ENCODE measurements at regions of chr10 and their contacts with region 1.

Region 1: GRCh38 chr10:119131512-119132240 is 27.8 kb downstream of the DENND10 start:
- DNase-seq: peak; percentile 72
- H3K4me3 Mint-ChIP-seq: peak overlapping the region; percentile 73
- H3K27ac Mint-ChIP-seq: peak overlapping the region; percentile 98
- H3K4me1 Mint-ChIP-seq: peaks cover 67% of the 10 kb centered on the region
- H3K27me3 Mint-ChIP-seq: no peaks in the 10 kb centered on the region

Region 2: GRCh38 chr10:118990326-118990725 is 141.3 kb before region 1 on chr10:
- CTCF ChIA-PET with region 1: no interaction called
- POLR2A ChIA-PET with region 1: no interaction called
- DNase-seq: no peak
- H3K4me3 Mint-ChIP-seq: no peak overlapping the region
- H3K27ac Mint-ChIP-seq: no peak overlapping the region
- H3K4me1 Mint-ChIP-seq: peaks cover 15% of the 10 kb centered on the region
- H3K27me3 Mint-ChIP-seq: peaks cover 44% of the 10 kb centered on the region

Region 3: DNA sequence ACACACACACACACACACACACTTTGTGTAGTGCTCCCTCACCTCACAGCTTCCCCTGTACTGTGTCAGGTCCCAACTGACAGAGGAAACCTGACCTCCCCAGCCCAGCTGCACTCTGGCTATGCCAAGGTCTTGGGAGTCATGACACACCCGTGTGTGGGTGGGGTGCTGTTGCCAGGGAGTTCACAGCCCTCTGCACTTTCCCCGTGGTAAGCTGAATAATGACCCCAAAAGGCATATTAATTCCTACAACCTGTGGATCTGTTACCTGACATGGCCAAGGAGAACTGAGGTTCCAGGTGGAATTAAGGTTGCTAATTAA is 111.1 kb before region 1 on chr10:
- CTCF ChIA-PET with region 1: no interaction called
- POLR2A ChIA-PET with region 1: no interaction called
- DNase-seq: no peak
- H3K4me3 Mint-ChIP-seq: no peak overlapping the region
- H3K27ac Mint-ChIP-seq: no peak overlapping the region
- H3K4me1 Mint-ChIP-seq: no peaks in the 10 kb centered on the region
- H3K27me3 Mint-ChIP-seq: peaks cover 10% of the 10 kb centered on the region

Region 4: GRCh38 chr10:119080521-119081260 is 51.0 kb before region 1 on chr10 and contains the start of gene EIF3A:
- CTCF ChIA-PET with region 1: interaction called, 14 read pairs
- POLR2A ChIA-PET with region 1: interaction called, 117 read pairs
- DNase-seq: peak; percentile 94
- H3K4me3 Mint-ChIP-seq: peak within 1 kb of the TSS; percentile 95
- H3K27ac Mint-ChIP-seq: peak within 1 kb of the TSS; percentile 93
- H3K4me1 Mint-ChIP-seq: peaks cover 50% of the 10 kb centered on the region
- H3K27me3 Mint-ChIP-seq: no peaks in the 10 kb centered on the region
- total RNA-seq, gene EIF3A: 129 to 130 TPM

Region 5: DNA sequence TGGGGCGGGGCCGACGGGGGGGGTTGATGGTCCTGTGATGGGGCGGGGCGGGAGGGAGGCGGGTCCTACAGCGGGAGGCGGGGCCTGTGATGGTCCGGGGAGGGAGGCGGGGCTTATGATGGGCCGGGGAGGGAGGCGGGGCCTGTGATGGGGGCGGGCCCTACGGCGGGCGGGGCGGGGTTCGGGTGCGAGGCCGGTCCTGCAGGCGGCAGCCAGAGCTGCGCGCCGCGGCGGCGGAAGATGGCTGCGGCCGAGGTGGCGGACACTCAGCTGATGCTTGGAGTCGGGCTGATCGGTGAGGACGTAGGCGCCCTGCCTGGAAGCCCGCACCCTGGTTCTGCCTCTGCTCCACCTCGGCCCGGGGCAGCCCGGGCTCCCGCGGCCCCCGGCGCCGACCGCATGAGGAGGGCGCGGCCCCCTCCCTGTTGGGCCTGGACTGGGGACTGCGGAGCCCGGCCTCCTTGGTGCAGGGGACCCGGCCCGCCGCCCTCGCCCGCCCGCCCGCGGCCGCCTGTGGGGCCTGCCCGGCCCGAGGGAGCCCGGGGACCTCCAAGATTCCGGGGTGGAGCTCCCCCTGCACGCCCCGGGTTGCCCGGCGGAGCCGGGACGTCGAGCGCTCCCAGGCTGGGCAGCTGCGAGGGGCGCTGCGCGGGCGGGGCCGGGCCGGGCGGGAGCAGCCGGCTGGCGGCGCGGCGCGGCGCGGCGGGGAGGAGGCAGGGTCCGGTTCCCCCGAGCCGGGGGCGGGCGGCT is 27.6 kb before region 1 on chr10 and contains the start of gene DENND10:
- CTCF ChIA-PET with region 1: interaction called, 9 read pairs
- POLR2A ChIA-PET with region 1: interaction called, 90 read pairs
- DNase-seq: peak; percentile 81
- H3K4me3 Mint-ChIP-seq: peak within 1 kb of the TSS; percentile 76
- H3K27ac Mint-ChIP-seq: peak within 1 kb of the TSS; percentile 21
- H3K4me1 Mint-ChIP-seq: peaks cover 43% of the 10 kb centered on the region
- H3K27me3 Mint-ChIP-seq: no peaks in the 10 kb centered on the region
- total RNA-seq, gene DENND10: 52.4 to 57.1 TPM

Region 6: DNA sequence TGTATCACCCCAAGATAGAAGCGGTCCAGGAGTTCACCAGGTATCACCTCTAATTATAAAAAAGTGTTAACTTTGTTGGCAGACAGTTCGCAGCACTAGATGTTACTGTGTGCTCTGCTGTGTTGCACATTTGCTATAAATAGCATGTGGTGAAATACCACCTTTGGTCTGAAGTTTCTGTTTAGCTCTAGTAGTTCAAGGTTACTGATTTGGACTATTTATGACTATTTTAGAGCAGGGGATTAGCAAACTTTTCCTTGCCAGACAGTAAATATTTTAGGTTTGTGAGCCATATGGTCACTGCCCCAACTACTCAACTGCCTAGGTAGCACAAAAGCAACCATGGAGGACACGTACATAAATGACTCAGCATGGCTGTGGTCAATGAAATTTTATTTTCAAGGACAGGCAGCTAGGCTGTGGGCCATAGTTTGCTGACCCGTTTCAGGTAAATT is 11.2 kb before region 1 on chr10:
- CTCF ChIA-PET with region 1: interaction called, 13 read pairs
- POLR2A ChIA-PET with region 1: interaction called, 22 read pairs
- DNase-seq: no peak
- H3K4me3 Mint-ChIP-seq: no peak overlapping the region
- H3K27ac Mint-ChIP-seq: peak overlapping the region; percentile 26
- H3K4me1 Mint-ChIP-seq: peaks cover 22% of the 10 kb centered on the region
- H3K27me3 Mint-ChIP-seq: no peaks in the 10 kb centered on the region

Region 7: DNA sequence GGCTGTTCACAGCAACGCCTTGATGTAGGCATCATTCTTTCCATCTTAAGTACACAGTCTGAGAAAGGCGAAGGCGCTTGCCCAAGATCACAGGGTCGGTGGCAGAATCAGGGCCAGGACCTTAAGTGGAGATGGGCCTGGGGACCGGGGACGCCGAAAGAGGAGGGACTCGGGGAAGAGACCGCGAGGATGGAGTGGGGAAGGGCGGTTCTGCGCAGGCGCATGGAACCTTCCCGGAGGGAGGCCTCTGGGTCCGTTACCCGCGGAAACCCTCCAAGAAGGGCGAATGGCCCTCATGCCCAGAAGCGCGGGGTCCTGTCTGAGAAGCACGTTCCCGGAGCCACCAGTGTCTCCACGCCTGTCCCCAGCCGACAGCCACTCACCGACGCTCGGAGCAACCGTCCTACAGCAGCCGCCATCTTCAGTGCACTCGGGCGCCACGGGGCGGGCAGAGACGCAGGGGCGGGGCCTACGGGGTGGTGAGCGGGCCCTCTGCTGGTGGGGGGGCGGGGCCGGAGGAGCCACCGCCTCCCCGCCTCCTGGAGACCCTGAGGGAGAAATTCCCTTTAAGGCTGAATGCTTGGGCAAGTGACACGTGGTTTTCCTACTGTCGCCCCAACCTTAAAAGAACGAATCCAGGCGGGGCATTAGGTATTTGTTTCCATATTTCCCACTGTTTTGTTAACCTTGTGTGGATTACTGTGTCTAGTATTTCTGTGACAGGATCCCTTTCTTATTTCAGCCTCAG is 46.9 kb after region 1 on chr10 and contains the start of gene PRDX3:
- CTCF ChIA-PET with region 1: interaction called, 4 read pairs
- POLR2A ChIA-PET with region 1: interaction called, 17 read pairs
- DNase-seq: peak; percentile 94
- H3K4me3 Mint-ChIP-seq: peak within 1 kb of the TSS; percentile 96
- H3K27ac Mint-ChIP-seq: peak within 1 kb of the TSS; percentile 97
- H3K4me1 Mint-ChIP-seq: peaks cover 41% of the 10 kb centered on the region
- H3K27me3 Mint-ChIP-seq: no peaks in the 10 kb centered on the region
- total RNA-seq, gene PRDX3: 115 to 117 TPM